Sciatic nerve (tissue), 2 donors: ENCODE measurements at regions of chr17 and their contacts with region 1.

Region 1: DNA sequence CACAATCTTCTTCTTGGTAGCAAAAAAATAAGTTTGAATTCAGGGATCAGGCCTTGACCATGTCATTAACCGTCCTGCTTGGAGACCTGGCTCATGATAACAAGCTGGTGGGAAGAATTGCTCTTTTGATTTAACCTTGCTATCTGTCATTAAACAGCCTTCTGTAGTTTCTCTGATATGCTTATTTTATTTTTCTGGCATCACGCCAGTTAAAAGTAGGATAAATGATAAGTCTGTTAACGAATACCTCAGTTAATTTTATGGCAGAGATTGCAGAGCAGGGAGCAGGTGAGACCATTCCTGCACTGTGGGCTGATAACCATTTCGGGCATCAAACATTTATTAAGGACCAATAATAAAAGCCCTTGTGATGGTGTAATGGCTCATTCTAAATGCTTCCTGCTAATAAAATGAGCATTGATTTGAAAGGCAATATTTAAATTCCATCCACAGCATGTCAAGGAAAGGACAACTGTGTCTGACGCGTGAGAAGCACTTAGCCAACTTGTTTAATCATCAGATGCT is 94.2 kb downstream of the ASIC2 start:
- DNase-seq: no peak
- ATAC-seq: no peak

Region 2: DNA sequence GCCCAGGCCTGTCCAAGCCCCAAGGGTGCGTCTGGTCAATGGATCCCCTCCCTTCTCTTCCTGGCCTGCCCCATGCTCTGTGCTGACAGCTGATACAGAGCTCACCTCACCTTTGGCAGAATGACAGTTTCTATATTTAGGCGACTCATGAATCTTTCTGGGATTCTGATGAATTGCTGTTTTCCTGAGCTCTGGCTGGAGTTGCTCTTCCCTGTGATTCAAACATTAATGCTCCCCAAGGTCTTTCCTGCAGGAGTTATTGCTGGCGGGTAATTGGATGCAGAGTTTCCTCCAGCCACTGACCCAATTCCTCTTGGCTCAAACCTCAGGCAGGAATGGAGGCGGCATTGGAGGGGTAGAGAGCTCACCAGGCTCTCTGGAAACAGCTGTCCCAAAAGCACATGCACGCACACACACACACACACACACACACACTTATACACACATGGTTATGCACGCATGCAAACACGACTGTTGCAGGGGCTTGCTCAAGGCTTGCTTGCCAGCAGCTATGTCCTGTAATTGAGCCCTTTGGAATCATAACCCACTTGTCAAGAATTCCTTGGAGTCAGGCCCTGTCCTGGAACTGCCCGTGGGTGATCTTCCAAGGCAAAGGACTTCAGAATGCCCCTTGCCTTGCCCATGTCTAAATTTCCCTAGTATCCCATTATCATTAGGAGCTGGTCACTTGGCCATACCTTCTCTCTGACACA is 34.6 kb before region 1 on chr17:
- intact Hi-C with region 1: loop called (anchors 1 kb)
- DNase-seq: no peak
- ATAC-seq: no peak

Region 3: GRCh38 chr17:33377837-33378595 is 179.1 kb after region 1 on chr17:
- intact Hi-C with region 1: no loop called
- DNase-seq: no peak
- ATAC-seq: no peak